Activated CD8-positive, alpha-beta T cell treated with anti-CD3 and anti-CD28 coated beads for 36 hours (primary cell): ENCODE measurements at regions of chr6 and their contacts with region 1.

Region 1: GRCh38 chr6:89805814-89806371 is 13.7 kb downstream of the MDN1 start:
- DNase-seq: no peak
- ATAC-seq: no peak
- H3K4me3 Mint-ChIP-seq: no peak overlapping the region
- H3K27ac Mint-ChIP-seq: peak overlapping the region; percentile 7
- H3K4me1 Mint-ChIP-seq: peaks cover 22% of the 10 kb centered on the region
- H3K27me3 Mint-ChIP-seq: no peaks in the 10 kb centered on the region
- CTCF ChIP-seq: no peak

Region 2: GRCh38 chr6:89792873-89793272 is 13.0 kb before region 1 on chr6:
- CTCF ChIA-PET with region 1: interaction called, 3 read pairs
- POLR2A ChIA-PET with region 1: interaction called, 12 read pairs
- intact Hi-C with region 1: no loop called
- DNase-seq: peak; percentile 52
- ATAC-seq: peak; percentile 76
- H3K4me3 Mint-ChIP-seq: no peak overlapping the region
- H3K27ac Mint-ChIP-seq: peak overlapping the region; percentile 1
- H3K4me1 Mint-ChIP-seq: peaks cover 24% of the 10 kb centered on the region
- H3K27me3 Mint-ChIP-seq: no peaks in the 10 kb centered on the region
- CTCF ChIP-seq: peak; percentile 28